Stomach (tissue), 19 donors: ENCODE measurements at regions of chr20 and their contacts with region 1.

Region 1: DNA sequence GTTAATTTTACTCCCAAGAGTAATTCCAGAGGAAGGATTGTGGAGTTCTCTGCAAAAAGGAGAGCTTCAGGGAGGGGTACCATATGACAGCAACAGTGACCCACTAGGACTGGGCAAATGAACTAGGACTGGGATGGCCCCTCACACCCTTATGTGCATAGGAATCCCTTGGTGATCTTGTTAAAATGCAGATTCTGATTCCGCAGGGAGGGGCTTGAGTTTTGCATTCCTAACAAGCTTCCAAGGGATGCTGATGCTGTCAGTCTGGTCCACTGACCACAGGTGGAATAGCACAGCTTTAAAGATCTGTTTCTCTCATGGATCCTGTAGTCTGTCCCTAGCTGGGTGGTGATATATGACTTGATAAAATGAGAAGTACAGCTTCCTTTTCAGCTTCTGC is 6.3 kb upstream of the FOXA2 start:
- DNase-seq: no peak
- H3K4me3 ChIP-seq: no peak overlapping the region
- H3K27ac ChIP-seq: no peak overlapping the region
- H3K4me1 ChIP-seq: peaks cover 9 to 14% (median 13%) of the 10 kb centered on the region in 4 donors
- H3K27me3 ChIP-seq: peaks cover 6 to 63% (median 23%) of the 10 kb centered on the region in 3 donors
- CTCF ChIP-seq: no peak
- EP300 ChIP-seq: no peak
- POLR2A ChIP-seq: no peak

Region 2: GRCh38 chr20:22346716-22347115 is 243.9 kb before region 1 on chr20:
- intact Hi-C with region 1: loop called (anchors 10 kb)
- DNase-seq: no peak
- H3K4me3 ChIP-seq: no peak overlapping the region
- H3K27ac ChIP-seq: no peak overlapping the region
- H3K4me1 ChIP-seq: no peaks in the 10 kb centered on the region
- H3K27me3 ChIP-seq: peaks cover 0 to 12% (median 0%) of the 10 kb centered on the region in 3 donors
- CTCF ChIP-seq: no peak
- EP300 ChIP-seq: no peak
- POLR2A ChIP-seq: no peak

Region 3: GRCh38 chr20:22371843-22372242 is 218.8 kb before region 1 on chr20:
- intact Hi-C with region 1: loop called (anchors 10 kb)
- DNase-seq: peak in 1 of 2 donors; percentile 54
- H3K4me3 ChIP-seq: no peak overlapping the region
- H3K27ac ChIP-seq: no peak overlapping the region
- H3K4me1 ChIP-seq: no peaks in the 10 kb centered on the region
- H3K27me3 ChIP-seq: peaks cover 0 to 32% (median 0%) of the 10 kb centered on the region in 3 donors
- CTCF ChIP-seq: no peak
- EP300 ChIP-seq: no peak
- POLR2A ChIP-seq: no peak